H1 (cell line): ENCODE measurements at regions of chr3 and their contacts with region 1.

Region 1: GRCh38 chr3:124391774-124392173 is 338.5 kb upstream of the UMPS start:
- DNase-seq: no peak
- H3K4me3 ChIP-seq: no peak overlapping the region
- H3K27ac ChIP-seq: no peak overlapping the region
- H3K4me1 ChIP-seq: no peaks in the 10 kb centered on the region; a peak in 1 of 7 replicates
- H3K27me3 ChIP-seq: no peaks in the 10 kb centered on the region
- CTCF ChIP-seq: no peak
- EP300 ChIP-seq: no peak
- POLR2A ChIP-seq: no peak
- RAD21 ChIP-seq: no peak

Region 2: DNA sequence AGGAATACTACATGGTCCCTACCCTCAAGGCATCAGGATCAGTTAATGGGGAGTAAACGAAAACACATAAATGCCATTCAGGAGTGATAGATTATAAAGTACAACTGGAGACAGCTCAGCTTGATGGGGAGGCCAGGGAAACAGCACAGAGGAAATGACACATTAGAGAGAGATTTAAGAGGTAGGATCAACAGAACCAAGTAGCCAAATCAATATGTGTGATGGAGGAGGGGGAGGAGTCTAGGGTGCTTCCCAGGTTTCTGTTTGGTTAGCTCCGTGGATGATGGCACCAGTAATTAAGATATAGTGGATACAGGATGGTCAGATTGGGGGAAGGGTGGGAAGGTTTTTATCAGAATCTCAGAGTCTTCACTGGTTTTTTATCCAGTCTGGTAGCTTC is 170.4 kb before region 1 on chr3:
- CTCF ChIA-PET with region 1: no interaction called
- POLR2A ChIA-PET with region 1: no interaction called
- DNase-seq: no peak
- H3K4me3 ChIP-seq: no peak overlapping the region
- H3K27ac ChIP-seq: no peak overlapping the region
- H3K4me1 ChIP-seq: peaks cover 0 to 7% (median 2%) of the 10 kb centered on the region in 4 experiments; a peak in 4 of 7 replicates
- H3K27me3 ChIP-seq: no peaks in the 10 kb centered on the region
- CTCF ChIP-seq: no peak
- EP300 ChIP-seq: no peak
- POLR2A ChIP-seq: no peak
- RAD21 ChIP-seq: no peak

Region 3: GRCh38 chr3:124401843-124402242 is 10.1 kb after region 1 on chr3:
- CTCF ChIA-PET with region 1: interaction called, 10 read pairs
- POLR2A ChIA-PET with region 1: no interaction called
- DNase-seq: no peak
- H3K4me3 ChIP-seq: no peak overlapping the region
- H3K27ac ChIP-seq: no peak overlapping the region
- H3K4me1 ChIP-seq: no peaks in the 10 kb centered on the region; a peak in 1 of 7 replicates
- H3K27me3 ChIP-seq: no peaks in the 10 kb centered on the region
- CTCF ChIP-seq: no peak
- EP300 ChIP-seq: no peak
- POLR2A ChIP-seq: no peak
- RAD21 ChIP-seq: no peak